AG04450 (cell line): ENCODE measurements at regions of chr1 and their contacts with region 1.

Region 1: GRCh38 chr1:161382214-161383019 is 14.7 kb upstream of the CFAP126 start:
- DNase-seq: no peak
- H3K4me3 ChIP-seq: no peak overlapping the region
- H3K27ac ChIP-seq: peak overlapping the region; percentile 34
- H3K27me3 ChIP-seq: no peaks in the 10 kb centered on the region
- CTCF ChIP-seq: peak; percentile 65

Region 2: DNA sequence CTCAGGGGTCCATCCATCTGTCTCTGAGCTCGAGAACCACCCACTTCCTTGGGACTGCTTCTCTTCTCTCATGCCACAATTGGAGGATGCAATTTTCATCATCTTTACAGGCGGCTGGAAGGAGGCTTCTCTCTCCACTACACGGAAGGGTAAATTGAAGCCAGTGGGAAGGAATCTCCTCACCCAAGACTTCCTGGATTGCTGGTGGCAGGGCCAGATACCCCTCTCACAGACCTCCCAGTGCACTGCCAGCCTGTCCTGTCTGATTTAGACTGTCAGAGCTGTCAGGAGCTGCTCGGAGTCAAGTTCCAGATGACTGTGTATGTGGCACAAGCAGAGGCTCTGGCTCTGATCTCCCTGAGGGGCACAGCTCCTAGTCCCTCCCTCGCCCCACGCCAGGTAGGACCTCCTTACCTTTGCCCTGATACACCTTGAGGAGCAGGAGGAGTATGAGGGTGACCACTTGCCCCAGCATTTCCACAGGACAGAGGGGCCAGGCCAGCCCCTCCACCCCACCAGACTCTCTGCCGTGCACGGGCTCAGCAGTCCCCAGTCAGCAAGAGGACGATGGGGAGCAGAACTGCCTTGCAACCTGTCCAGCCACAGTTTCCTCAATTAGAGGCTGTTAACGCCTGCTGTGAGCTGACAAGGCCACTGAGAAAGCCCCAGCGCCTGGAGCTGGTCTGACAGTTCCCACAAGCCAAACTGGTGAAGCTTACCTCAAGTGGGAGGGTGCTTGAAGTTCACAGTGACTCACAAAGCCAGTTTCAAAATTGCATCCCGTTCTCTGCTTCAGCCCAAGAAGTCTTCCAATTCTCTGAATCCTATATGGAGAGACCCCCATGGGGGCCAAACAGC is 520.0 kb before region 1 on chr1 and contains the start of gene CD244:
- CTCF ChIA-PET with region 1: no interaction called
- POLR2A ChIA-PET with region 1: no interaction called
- DNase-seq: no peak
- H3K4me3 ChIP-seq: no peak within 1 kb of the TSS
- H3K27ac ChIP-seq: no peak within 1 kb of the TSS
- H3K27me3 ChIP-seq: no peaks in the 10 kb centered on the region
- CTCF ChIP-seq: no peak
- polyA plus RNA-seq, gene CD244: not detected in 2 replicates

Region 3: GRCh38 chr1:160901768-160902167 is 480.6 kb before region 1 on chr1:
- CTCF ChIA-PET with region 1: no interaction called
- POLR2A ChIA-PET with region 1: no interaction called
- DNase-seq: no peak
- H3K4me3 ChIP-seq: no peak overlapping the region
- H3K27ac ChIP-seq: no peak overlapping the region
- H3K27me3 ChIP-seq: no peaks in the 10 kb centered on the region
- CTCF ChIP-seq: no peak

Region 4: GRCh38 chr1:161165742-161166668 is 216.4 kb before region 1 on chr1 and contains the start of gene PPOX:
- CTCF ChIA-PET with region 1: interaction called, 15 read pairs
- POLR2A ChIA-PET with region 1: no interaction called
- DNase-seq: peak; percentile 93
- H3K4me3 ChIP-seq: peak within 1 kb of the TSS; percentile 86
- H3K27ac ChIP-seq: peak within 1 kb of the TSS; percentile 93
- H3K27me3 ChIP-seq: no peaks in the 10 kb centered on the region
- CTCF ChIP-seq: peak; percentile 55
- polyA plus RNA-seq, gene PPOX: 9.7 and 9.8 TPM in 2 replicates

Region 5: GRCh38 chr1:161192476-161193465 is 189.6 kb before region 1 on chr1:
- CTCF ChIA-PET with region 1: interaction called, 65 read pairs
- POLR2A ChIA-PET with region 1: no interaction called
- DNase-seq: peak; percentile 37
- H3K4me3 ChIP-seq: no peak overlapping the region
- H3K27ac ChIP-seq: no peak overlapping the region
- H3K27me3 ChIP-seq: no peaks in the 10 kb centered on the region
- CTCF ChIP-seq: peak; percentile 92

Region 6: GRCh38 chr1:161209790-161210409 is 172.5 kb before region 1 on chr1:
- CTCF ChIA-PET with region 1: interaction called, 29 read pairs
- POLR2A ChIA-PET with region 1: no interaction called
- DNase-seq: no peak
- H3K4me3 ChIP-seq: no peak overlapping the region
- H3K27ac ChIP-seq: no peak overlapping the region
- H3K27me3 ChIP-seq: no peaks in the 10 kb centered on the region
- CTCF ChIP-seq: peak; percentile 93

Region 7: DNA sequence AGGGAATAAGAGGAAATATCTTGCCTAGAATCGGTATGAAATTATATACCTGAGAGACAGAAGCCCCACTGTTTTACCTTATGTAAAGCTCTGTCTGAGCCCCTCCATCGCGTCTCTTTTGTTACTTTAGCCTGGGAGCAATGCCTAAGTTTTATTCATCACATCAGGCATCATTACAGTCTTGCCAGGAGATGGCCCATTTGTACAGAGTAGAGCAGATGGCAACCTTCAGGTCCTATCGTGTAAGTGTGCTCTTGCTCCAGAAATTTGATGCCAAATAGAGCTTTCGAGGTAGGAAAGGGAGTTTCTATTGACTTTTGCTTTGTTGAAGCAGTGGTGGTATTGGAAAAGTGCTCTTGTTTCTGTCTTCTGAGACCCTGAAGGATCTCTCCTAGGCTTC is 39.6 kb before region 1 on chr1:
- CTCF ChIA-PET with region 1: interaction called, 11 read pairs
- POLR2A ChIA-PET with region 1: no interaction called
- DNase-seq: no peak
- H3K4me3 ChIP-seq: no peak overlapping the region
- H3K27ac ChIP-seq: no peak overlapping the region
- H3K27me3 ChIP-seq: no peaks in the 10 kb centered on the region
- CTCF ChIP-seq: no peak

Region 8: DNA sequence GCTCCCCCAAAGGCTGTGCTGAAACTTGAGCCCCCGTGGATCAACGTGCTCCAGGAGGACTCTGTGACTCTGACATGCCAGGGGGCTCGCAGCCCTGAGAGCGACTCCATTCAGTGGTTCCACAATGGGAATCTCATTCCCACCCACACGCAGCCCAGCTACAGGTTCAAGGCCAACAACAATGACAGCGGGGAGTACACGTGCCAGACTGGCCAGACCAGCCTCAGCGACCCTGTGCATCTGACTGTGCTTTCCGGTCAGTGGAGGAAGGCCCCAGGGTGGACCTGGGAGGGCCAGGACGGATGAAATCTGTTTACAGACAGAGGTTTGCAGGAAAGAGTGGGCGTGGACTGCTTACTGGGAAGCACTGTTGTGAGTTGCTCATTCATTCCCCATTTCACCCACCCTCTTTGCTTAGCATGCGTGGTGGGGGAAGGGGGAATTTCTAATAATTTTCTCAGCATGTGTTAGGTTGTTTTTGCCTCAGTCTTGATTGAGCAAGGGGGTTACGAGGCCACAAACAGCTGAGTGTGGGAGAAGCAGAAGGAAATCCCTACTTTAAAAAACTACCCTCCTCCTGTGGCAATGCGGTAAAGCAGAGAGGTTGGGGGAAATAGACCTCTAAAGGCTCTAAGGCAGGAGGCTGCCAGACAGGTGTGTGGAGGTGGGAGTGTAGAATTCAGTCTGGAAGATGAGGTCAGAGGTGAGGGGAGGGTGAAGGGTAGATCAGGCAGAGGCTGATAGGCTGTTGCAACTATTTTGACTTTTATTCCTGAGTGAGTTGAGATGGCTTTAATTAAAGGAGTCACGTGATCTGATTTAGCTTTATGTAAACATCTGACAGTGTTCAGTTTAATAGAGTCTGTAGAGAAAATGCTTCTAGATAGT is 124.2 kb after region 1 on chr1:
- CTCF ChIA-PET with region 1: no interaction called
- POLR2A ChIA-PET with region 1: no interaction called
- DNase-seq: no peak
- H3K4me3 ChIP-seq: no peak overlapping the region
- H3K27ac ChIP-seq: peak overlapping the region; percentile 21
- H3K27me3 ChIP-seq: no peaks in the 10 kb centered on the region
- CTCF ChIP-seq: no peak